A673 (cell line): ENCODE measurements at regions of chr7 and their contacts with region 1.

Region 1: DNA sequence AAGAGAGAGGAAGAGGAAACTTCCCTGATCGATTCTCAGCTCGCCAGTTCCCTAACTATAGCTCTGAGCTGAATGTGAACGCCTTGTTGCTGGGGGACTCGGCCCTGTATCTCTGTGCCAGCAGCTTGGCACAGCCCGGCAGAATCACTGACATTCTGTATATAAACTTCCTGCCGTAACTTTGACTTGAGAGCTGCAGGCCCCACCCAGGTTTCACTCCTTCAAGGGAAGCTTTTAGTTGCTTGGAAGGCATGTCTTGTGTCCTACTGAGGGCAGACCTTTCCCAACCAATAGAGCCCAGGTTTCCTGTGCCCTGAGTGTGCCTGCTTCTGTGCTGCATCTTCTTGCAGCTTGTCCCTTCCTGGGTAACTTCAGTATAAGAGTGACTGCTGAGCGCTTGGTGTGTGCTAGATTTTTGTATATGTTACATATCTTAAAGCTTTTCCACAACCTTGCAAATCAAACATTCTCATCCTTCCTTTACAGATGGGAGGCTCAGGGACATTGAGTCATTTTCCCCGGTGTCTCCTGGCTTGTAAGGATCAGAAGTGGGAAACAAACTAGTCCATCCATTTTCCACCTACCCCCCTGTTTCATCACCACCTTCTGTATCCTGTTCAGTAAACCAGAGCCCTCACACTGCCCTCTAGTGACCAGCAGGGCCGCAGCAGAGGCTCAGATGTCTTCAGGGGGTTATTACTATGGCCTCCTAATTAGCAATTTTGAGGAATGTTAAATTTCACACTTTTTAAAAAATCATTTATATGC is 225.2 kb upstream of the PRSS58 start:
- DNase-seq: peak; percentile 50
- H3K4me3 ChIP-seq: no peak overlapping the region
- H3K27ac ChIP-seq: no peak overlapping the region
- H3K4me1 ChIP-seq: no peaks in the 10 kb centered on the region
- H3K27me3 ChIP-seq: no peaks in the 10 kb centered on the region
- CTCF ChIP-seq: peak; percentile 83

Region 2: DNA sequence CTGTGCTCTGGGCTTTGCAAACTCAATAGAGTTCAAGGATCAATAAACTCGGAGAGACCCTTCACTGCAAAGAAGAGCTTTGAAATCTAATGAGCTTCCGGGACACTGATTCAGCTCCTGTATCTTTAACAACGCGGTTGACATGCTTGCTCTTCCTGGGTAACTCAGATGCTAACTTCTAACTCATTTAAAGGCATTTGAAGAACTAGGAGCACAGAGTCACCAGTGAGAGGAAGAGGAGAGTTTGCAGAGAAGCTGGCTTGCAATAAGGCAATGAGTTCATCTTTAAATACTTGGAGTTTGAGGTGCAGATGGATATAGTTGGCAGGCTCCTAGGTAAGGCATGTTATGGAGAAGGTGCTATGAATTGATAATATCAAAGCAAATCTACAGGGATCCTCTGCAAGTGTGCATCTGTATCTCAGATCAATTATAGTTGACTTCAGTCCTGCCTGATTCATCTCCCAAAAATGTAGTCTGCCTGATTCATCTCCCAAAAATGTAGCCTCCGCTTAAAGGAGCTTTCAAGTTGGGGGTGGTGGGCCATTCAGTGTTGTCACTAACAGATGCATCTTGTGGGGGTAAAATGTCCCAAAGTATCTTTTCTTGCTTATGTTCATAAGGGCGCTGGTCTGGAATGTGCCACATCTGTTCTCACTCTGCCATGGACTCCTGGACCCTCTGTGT is 42.7 kb before region 1 on chr7:
- CTCF ChIA-PET with region 1: no interaction called
- POLR2A ChIA-PET with region 1: no interaction called
- intact Hi-C with region 1: loop called (anchors 5 kb)
- DNase-seq: peak; percentile 70
- H3K4me3 ChIP-seq: no peak overlapping the region
- H3K27ac ChIP-seq: no peak overlapping the region
- H3K4me1 ChIP-seq: peaks cover 6% of the 10 kb centered on the region
- H3K27me3 ChIP-seq: no peaks in the 10 kb centered on the region
- CTCF ChIP-seq: no peak